Sigmoid colon (tissue), 7 donors: ENCODE measurements at regions of chr6 and their contacts with region 1.

Region 1: GRCh38 chr6:41683510-41684310 is 45.4 kb downstream of the MDFI start:
- DNase-seq: peak; percentile 90
- H3K4me3 ChIP-seq: peak overlapping the region; percentile 30 to 50 (median 46)
- H3K27ac ChIP-seq: peak overlapping the region; percentile 57 to 70 (median 62)
- H3K4me1 ChIP-seq: peaks cover 0 to 26% (median 22%) of the 10 kb centered on the region in 4 donors
- H3K27me3 ChIP-seq: no peaks in the 10 kb centered on the region
- CTCF ChIP-seq: peak; percentile 83 to 90 (median 89)
- EP300 ChIP-seq: no peak
- POLR2A ChIP-seq: no peak

Region 2: GRCh38 chr6:41602864-41603608 is 80.7 kb before region 1 on chr6:
- intact Hi-C with region 1: loop called (anchors 1 kb)
- DNase-seq: peak; percentile 91
- H3K4me3 ChIP-seq: peak overlapping the region in 3 of 4 donors; percentile 6 to 33 (median 10)
- H3K27ac ChIP-seq: peak overlapping the region; percentile 18 to 81 (median 66)
- H3K4me1 ChIP-seq: peaks cover 0 to 21% (median 15%) of the 10 kb centered on the region in 4 donors
- H3K27me3 ChIP-seq: no peaks in the 10 kb centered on the region
- CTCF ChIP-seq: peak; percentile 81 to 92 (median 86)
- EP300 ChIP-seq: no peak
- POLR2A ChIP-seq: no peak

Region 3: DNA sequence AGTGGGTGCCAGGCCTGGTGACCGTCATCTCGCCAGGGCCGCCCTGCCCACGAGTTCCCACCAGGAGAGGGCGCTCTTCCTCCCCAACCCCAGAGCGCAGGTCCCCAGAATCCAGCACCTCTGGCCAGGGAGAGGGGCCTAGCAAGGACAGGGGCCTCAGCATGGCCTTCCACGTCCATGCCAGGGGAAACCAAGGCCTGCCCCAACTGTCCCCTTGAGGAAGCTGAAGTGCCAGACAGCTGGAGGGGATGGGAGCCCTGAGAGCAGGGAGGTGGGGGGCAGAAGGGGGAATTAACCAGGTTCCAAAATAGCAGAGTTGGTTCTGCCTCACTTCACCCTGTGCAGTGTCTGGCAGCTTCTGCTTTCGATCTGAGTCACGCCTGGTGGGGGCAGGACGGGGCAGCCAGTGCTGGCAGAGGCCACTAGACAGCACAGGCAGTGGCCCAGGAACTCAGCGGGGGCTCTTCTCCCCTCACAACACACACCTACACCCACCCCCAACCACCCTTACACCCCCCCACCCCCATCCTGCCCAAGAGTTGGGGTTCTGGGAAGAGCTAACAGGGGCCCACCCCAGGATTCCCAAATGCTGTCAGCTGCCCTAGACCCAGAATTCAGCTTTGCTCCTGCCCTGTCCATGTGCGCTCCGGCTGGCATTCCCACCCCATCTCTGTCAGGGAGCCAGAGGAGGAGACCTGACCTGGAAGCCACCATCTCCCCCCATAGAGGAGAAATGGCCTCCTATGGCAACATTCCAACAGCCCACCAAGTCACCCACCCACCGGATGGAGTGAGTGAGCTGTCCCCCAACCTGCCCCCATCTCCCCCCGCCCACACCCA is 22.5 kb after region 1 on chr6:
- intact Hi-C with region 1: no loop called
- DNase-seq: peak; percentile 93
- H3K4me3 ChIP-seq: peak overlapping the region in 1 of 4 donors; percentile 5
- H3K27ac ChIP-seq: peak overlapping the region; percentile 84 to 92 (median 88)
- H3K4me1 ChIP-seq: peaks cover 0 to 81% (median 67%) of the 10 kb centered on the region in 4 donors
- H3K27me3 ChIP-seq: no peaks in the 10 kb centered on the region
- CTCF ChIP-seq: peak; percentile 77 to 85 (median 79)
- EP300 ChIP-seq: no peak
- POLR2A ChIP-seq: no peak